ENCODE measurements at regions of chr20 and their contacts with region 1.

Region 1: GRCh38 chr20:44115762-44116644 is 71.0 kb downstream of the JPH2 start:
- DNase-seq: no peak
- ATAC-seq: no peak
- H3K4me3 Mint-ChIP-seq: no peak overlapping the region
- H3K27ac Mint-ChIP-seq: no peak overlapping the region
- H3K4me1 Mint-ChIP-seq: peaks cover 5% of the 10 kb centered on the region
- H3K27me3 Mint-ChIP-seq: peaks cover 23% of the 10 kb centered on the region

Region 2: GRCh38 chr20:44129911-44130718 is 14.1 kb after region 1 on chr20:
- CTCF ChIA-PET with region 1: interaction called, 10 read pairs
- POLR2A ChIA-PET with region 1: no interaction called
- intact Hi-C with region 1: no loop called
- DNase-seq: no peak
- ATAC-seq: no peak
- H3K4me3 Mint-ChIP-seq: no peak overlapping the region
- H3K27ac Mint-ChIP-seq: no peak overlapping the region
- H3K4me1 Mint-ChIP-seq: no peaks in the 10 kb centered on the region
- H3K27me3 Mint-ChIP-seq: peaks cover 2% of the 10 kb centered on the region

Region 3: DNA sequence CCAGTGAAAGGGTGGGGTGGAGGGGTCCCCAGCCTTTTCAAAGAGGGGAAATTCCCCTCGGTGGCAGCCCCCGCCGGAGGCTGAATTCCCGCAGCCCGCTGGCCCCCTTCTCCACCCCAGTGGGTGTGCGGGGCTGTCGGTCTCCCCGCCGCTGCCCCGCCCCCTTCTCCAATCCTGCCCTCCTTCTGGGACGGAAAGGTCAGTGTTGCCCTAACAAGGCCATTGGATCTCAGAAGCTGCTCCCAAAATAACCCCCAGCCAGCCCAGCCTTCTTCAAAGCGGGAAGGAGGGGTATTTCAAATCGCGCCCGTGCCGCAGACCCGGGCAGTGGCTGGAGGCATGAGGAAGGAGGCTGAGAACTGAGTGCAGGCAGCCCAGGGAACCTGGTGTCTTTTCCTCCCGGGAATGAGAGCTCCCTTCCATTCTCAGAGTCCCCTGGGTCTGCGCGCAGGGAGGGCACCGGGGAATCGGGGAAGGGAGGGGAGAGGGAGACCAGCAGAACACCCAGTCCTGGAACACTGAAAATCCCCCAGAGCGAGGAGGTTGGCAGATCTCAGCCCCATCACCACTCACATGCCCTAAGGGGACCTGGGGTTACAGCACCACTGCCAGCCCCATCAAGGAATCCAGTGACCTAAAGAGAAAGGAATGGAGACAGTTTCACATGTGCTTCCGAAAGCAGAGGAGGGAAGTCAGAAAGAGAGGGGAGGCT is 71.2 kb after region 1 on chr20 and contains the start of gene JPH2:
- CTCF ChIA-PET with region 1: interaction called, 166 read pairs
- POLR2A ChIA-PET with region 1: interaction called, 6 read pairs
- intact Hi-C with region 1: loop called (anchors 1 kb)
- DNase-seq: no peak
- ATAC-seq: no peak
- H3K4me3 Mint-ChIP-seq: no peak within 1 kb of the TSS
- H3K27ac Mint-ChIP-seq: no peak within 1 kb of the TSS
- H3K4me1 Mint-ChIP-seq: peaks cover 4% of the 10 kb centered on the region
- H3K27me3 Mint-ChIP-seq: peaks cover 42% of the 10 kb centered on the region
- total RNA-seq, gene JPH2: 0.07 TPM

Region 4: DNA sequence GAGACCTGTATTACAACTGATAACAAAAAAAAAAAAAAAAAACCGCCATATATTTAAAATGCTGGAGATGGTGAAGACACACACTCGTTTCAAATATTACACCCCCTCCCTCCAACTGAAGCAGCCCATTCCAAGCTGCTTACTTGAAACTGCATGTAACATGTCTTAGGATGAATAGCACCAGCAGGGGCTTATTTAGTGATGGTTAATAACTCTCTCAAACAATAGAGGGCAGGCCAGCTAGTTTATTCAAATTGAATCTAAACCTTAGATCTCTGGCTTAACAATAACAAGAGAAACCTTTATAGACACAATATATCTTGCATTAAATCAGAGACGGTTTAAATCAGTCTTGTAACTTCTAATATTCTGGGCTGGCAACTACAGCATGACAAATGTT is 80.3 kb after region 1 on chr20:
- CTCF ChIA-PET with region 1: interaction called, 166 read pairs
- POLR2A ChIA-PET with region 1: no interaction called
- intact Hi-C with region 1: no loop called
- DNase-seq: no peak
- ATAC-seq: no peak
- H3K4me3 Mint-ChIP-seq: no peak overlapping the region
- H3K27ac Mint-ChIP-seq: no peak overlapping the region
- H3K4me1 Mint-ChIP-seq: peaks cover 19% of the 10 kb centered on the region
- H3K27me3 Mint-ChIP-seq: no peaks in the 10 kb centered on the region

Measured in activated CD4-positive, alpha-beta T cell treated with anti-CD3 and anti-CD28 coated beads for 36 hours (primary cell).